MCF 10A (cell line): ENCODE measurements at regions of chr14 and their contacts with region 1.

Region 1: GRCh38 chr14:49461529-49462401 is 124.4 kb downstream of the RPS29 start:
- DNase-seq: peak; percentile 85
- H3K4me3 Mint-ChIP-seq: no peak overlapping the region
- H3K27ac Mint-ChIP-seq: no peak overlapping the region
- H3K4me1 Mint-ChIP-seq: no peaks in the 10 kb centered on the region
- H3K27me3 Mint-ChIP-seq: peaks cover 35% of the 10 kb centered on the region
- CTCF ChIP-seq: peak; percentile 67

Region 2: DNA sequence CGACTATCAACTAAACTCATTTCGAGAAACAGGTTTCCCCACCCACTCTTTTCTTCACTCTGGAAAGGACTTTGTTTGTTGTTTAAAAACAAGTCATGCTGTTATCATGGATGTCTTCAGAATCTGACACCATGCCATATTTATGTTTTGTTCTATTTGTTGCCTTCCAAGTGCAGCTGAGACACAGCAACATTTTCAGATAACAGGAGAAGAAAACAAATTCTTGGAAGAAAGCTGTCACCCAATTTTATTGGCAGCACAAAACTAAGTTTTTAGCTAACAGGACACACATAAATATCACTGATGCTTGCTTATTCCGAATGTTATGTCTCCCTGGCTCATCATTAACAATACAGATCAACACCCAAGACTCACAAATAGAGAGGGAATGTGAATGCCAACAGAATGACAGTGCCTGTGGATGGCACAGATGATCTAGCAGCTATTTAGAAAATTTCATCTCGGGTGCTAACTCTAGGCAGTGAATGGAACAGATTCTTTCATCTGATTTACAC is 23.5 kb before region 1 on chr14:
- CTCF ChIA-PET with region 1: interaction called, 10 read pairs
- POLR2A ChIA-PET with region 1: no interaction called
- intact Hi-C with region 1: no loop called
- DNase-seq: no peak
- H3K4me3 Mint-ChIP-seq: no peak overlapping the region
- H3K27ac Mint-ChIP-seq: no peak overlapping the region
- H3K4me1 Mint-ChIP-seq: no peaks in the 10 kb centered on the region
- H3K27me3 Mint-ChIP-seq: peaks cover 43% of the 10 kb centered on the region
- CTCF ChIP-seq: no peak

Region 3: GRCh38 chr14:49479432-49479831 is 17.7 kb after region 1 on chr14:
- CTCF ChIA-PET with region 1: interaction called, 15 read pairs
- POLR2A ChIA-PET with region 1: no interaction called
- intact Hi-C with region 1: no loop called
- DNase-seq: no peak
- H3K4me3 Mint-ChIP-seq: no peak overlapping the region
- H3K27ac Mint-ChIP-seq: no peak overlapping the region
- H3K4me1 Mint-ChIP-seq: no peaks in the 10 kb centered on the region
- H3K27me3 Mint-ChIP-seq: peaks cover 7% of the 10 kb centered on the region
- CTCF ChIP-seq: no peak

Region 4: DNA sequence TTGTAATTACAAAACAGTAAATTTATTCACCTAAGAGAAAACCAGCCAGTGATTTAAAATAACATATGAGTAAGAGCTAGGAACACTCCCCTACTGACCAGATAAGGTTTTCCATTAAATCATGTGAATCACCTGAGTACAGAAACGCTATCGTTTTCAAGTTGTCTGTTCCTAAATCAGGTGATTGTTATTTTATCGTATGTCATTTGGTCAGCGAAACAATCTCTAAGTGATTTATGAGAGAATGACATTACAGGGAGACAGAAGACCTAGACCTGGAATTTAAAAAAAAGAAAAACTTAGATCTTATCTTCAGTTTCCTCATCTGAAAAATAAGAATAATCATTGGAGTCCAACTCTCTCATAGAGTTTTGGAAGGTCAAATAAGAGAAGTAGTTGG is 77.2 kb after region 1 on chr14:
- CTCF ChIA-PET with region 1: interaction called, 10 read pairs
- POLR2A ChIA-PET with region 1: no interaction called
- intact Hi-C with region 1: no loop called
- DNase-seq: no peak
- H3K4me3 Mint-ChIP-seq: no peak overlapping the region
- H3K27ac Mint-ChIP-seq: no peak overlapping the region
- H3K4me1 Mint-ChIP-seq: no peaks in the 10 kb centered on the region
- H3K27me3 Mint-ChIP-seq: no peaks in the 10 kb centered on the region
- CTCF ChIP-seq: no peak

Region 5: GRCh38 chr14:49585803-49586672 is 124.3 kb after region 1 on chr14 and contains the start of gene RPS29:
- CTCF ChIA-PET with region 1: interaction called, 30 read pairs
- POLR2A ChIA-PET with region 1: no interaction called
- intact Hi-C with region 1: no loop called
- DNase-seq: peak; percentile 99
- H3K4me3 Mint-ChIP-seq: peak within 1 kb of the TSS; percentile 81
- H3K27ac Mint-ChIP-seq: peak within 1 kb of the TSS; percentile 98
- H3K4me1 Mint-ChIP-seq: peaks cover 19% of the 10 kb centered on the region
- H3K27me3 Mint-ChIP-seq: no peaks in the 10 kb centered on the region
- CTCF ChIP-seq: no peak
- total RNA-seq, gene RPS29: 1,499 and 1,837 TPM in 2 replicates

Region 6: DNA sequence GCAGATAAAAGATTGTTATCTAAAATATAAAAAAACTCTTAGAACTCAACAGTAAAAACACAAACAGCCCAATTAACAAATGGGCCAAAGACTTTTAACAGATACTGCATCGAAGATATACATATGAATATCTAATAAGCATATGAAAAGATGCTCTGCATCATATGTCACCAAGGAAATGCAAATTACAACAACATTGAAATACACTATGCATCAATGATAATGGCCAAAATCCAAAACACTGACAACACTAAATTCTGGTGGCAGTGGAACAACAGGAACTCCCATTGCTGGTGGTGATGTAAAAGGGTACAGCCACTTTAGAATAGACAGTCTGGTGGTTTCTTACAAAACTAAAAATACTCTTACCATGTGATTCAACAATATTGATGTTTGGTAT is 347.0 kb after region 1 on chr14:
- CTCF ChIA-PET with region 1: no interaction called
- POLR2A ChIA-PET with region 1: no interaction called
- intact Hi-C with region 1: no loop called
- DNase-seq: no peak
- H3K4me3 Mint-ChIP-seq: no peak overlapping the region
- H3K27ac Mint-ChIP-seq: no peak overlapping the region
- H3K4me1 Mint-ChIP-seq: no peaks in the 10 kb centered on the region
- H3K27me3 Mint-ChIP-seq: no peaks in the 10 kb centered on the region
- CTCF ChIP-seq: no peak